GM12878 (cell line): ENCODE measurements at regions of chr18 and their contacts with region 1.

Region 1: DNA sequence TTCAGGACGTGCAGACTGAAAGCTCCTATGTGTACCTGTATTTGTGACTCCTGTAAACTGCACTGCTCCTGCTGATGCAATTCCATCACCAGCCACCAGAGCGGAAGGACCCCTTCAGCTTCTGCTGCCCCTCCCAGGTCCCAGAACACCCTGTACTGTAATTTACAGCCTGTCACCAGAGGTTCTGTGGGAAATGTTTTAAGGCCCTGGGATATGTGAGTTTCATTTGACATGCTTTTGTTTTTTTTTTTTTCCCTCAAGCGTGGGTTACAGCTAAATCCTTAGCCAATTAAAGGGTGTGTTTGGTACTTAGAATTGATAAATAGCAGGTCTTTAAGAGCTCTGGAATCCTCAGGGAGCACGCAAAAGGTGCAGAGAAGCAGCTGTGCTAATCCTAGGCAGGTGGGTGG is 79.4 kb downstream of the KCTD1 start:
- DNase-seq: no peak
- ATAC-seq: peak; percentile 90
- H3K4me3 ChIP-seq: no peak overlapping the region
- H3K27ac ChIP-seq: peak overlapping the region; percentile 67; the same call in 1 of the 2 replicates
- H3K4me1 ChIP-seq: peaks cover 18% of the 10 kb centered on the region
- H3K27me3 ChIP-seq: no peaks in the 10 kb centered on the region
- CTCF ChIP-seq: peak; percentile 25 to 83 (median 80)
- EP300 ChIP-seq: no peak
- POLR2A ChIP-seq: no peak
- RAD21 ChIP-seq: peak; percentile 12; the same call in 1 of the 2 replicates

Region 2: GRCh38 chr18:26422472-26423162 is 46.3 kb before region 1 on chr18:
- CTCF ChIA-PET with region 1: interaction called, 3 read pairs
- POLR2A ChIA-PET with region 1: no interaction called
- RAD21 ChIA-PET with region 1: no interaction called
- SMC1A ChIA-PET with region 1: no interaction called
- in situ Hi-C with region 1: loop called (anchors 5 kb)
- intact Hi-C with region 1: no loop called
- DNase-seq: no peak
- ATAC-seq: peak; percentile 74
- H3K4me3 ChIP-seq: no peak overlapping the region
- H3K27ac ChIP-seq: peak overlapping the region; percentile 2; the same call in 1 of the 2 replicates
- H3K4me1 ChIP-seq: peaks cover 27% of the 10 kb centered on the region
- H3K27me3 ChIP-seq: no peaks in the 10 kb centered on the region
- CTCF ChIP-seq: no peak
- EP300 ChIP-seq: no peak
- POLR2A ChIP-seq: no peak
- RAD21 ChIP-seq: no peak

Region 3: DNA sequence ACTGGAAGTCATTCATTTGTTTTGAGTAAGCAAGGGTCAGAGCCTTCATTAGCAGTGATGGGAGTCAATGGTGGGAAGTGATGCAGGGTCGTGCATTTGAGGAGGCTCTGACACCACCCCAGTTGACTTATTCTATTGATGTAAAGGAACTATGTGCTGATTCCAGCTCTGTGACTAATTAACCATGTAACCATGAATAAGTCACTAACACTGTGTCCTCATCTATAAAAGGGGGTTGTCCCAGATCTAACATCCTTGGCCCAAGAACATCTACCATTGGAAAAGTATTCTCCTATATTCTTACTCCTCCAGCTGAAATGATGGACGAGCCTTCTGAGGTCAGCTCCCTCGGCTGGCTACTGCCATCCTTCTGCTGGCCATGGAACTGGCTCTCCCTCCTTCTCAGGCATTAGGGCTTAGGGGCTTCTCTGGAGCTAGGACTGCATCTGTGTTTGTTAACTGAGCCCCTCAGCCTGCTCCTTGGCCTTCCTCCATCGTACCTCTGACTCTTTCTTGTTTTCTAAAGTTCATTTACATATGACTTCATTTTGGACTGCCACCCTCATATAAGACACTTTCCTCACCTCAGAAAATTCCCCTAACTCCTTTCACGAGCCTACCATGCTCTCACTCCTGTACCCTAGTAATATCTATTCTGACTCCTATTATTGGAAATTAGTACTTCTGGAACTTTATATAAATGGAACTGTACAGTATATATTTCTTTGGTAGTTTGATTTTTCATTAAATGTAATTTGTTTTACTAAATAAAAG is 36.1 kb before region 1 on chr18:
- CTCF ChIA-PET with region 1: no interaction called
- POLR2A ChIA-PET with region 1: no interaction called
- RAD21 ChIA-PET with region 1: no interaction called
- SMC1A ChIA-PET with region 1: no interaction called
- in situ Hi-C with region 1: no loop called
- intact Hi-C with region 1: no loop called
- DNase-seq: no peak
- ATAC-seq: peak; percentile 61
- H3K4me3 ChIP-seq: no peak overlapping the region
- H3K27ac ChIP-seq: no peak overlapping the region
- H3K4me1 ChIP-seq: peaks cover 12% of the 10 kb centered on the region
- H3K27me3 ChIP-seq: no peaks in the 10 kb centered on the region
- CTCF ChIP-seq: no peak
- EP300 ChIP-seq: no peak
- POLR2A ChIP-seq: no peak
- RAD21 ChIP-seq: no peak

Region 4: GRCh38 chr18:26540043-26540628 is 71.2 kb after region 1 on chr18:
- CTCF ChIA-PET with region 1: no interaction called
- POLR2A ChIA-PET with region 1: no interaction called
- RAD21 ChIA-PET with region 1: no interaction called
- SMC1A ChIA-PET with region 1: interaction called, 3 read pairs
- in situ Hi-C with region 1: no loop called
- intact Hi-C with region 1: loop called (anchors 5 kb)
- DNase-seq: no peak
- ATAC-seq: no peak
- H3K4me3 ChIP-seq: no peak overlapping the region
- H3K27ac ChIP-seq: no peak overlapping the region
- H3K4me1 ChIP-seq: peaks cover 3% of the 10 kb centered on the region; the same call in 1 of the 2 replicates
- H3K27me3 ChIP-seq: no peaks in the 10 kb centered on the region
- CTCF ChIP-seq: no peak
- EP300 ChIP-seq: no peak
- POLR2A ChIP-seq: no peak
- RAD21 ChIP-seq: no peak

Region 5: GRCh38 chr18:26579941-26580618 is 111.1 kb after region 1 on chr18:
- CTCF ChIA-PET with region 1: no interaction called
- POLR2A ChIA-PET with region 1: no interaction called
- RAD21 ChIA-PET with region 1: no interaction called
- SMC1A ChIA-PET with region 1: no interaction called
- in situ Hi-C with region 1: no loop called
- intact Hi-C with region 1: no loop called
- DNase-seq: no peak
- ATAC-seq: no peak
- H3K4me3 ChIP-seq: no peak overlapping the region
- H3K27ac ChIP-seq: no peak overlapping the region
- H3K4me1 ChIP-seq: peaks cover 4% of the 10 kb centered on the region; the same call in 1 of the 2 replicates
- H3K27me3 ChIP-seq: no peaks in the 10 kb centered on the region; a peak in 1 of 4 replicates
- CTCF ChIP-seq: no peak
- EP300 ChIP-seq: no peak
- POLR2A ChIP-seq: no peak
- RAD21 ChIP-seq: no peak